ENCODE measurements at regions of chr1 and their contacts with region 1.

Region 1: GRCh38 chr1:32247983-32248889 is 1.2 kb downstream of the FAM167B start:
- DNase-seq: peak; percentile 73
- H3K4me3 Mint-ChIP-seq: peak overlapping the region; percentile 46
- H3K27ac Mint-ChIP-seq: peak overlapping the region; percentile 95
- H3K4me1 Mint-ChIP-seq: peaks cover 51% of the 10 kb centered on the region
- H3K27me3 Mint-ChIP-seq: no peaks in the 10 kb centered on the region

Region 2: GRCh38 chr1:32179443-32180185 is 68.6 kb before region 1 on chr1 and contains the start of gene TXLNA:
- intact Hi-C with region 1: loop called (anchors 5 kb)
- DNase-seq: peak; percentile 89
- H3K4me3 Mint-ChIP-seq: peak within 1 kb of the TSS; percentile 96
- H3K27ac Mint-ChIP-seq: peak within 1 kb of the TSS; percentile 93
- H3K4me1 Mint-ChIP-seq: peaks cover 47% of the 10 kb centered on the region
- H3K27me3 Mint-ChIP-seq: no peaks in the 10 kb centered on the region
- total RNA-seq, gene TXLNA: 109 and 110 TPM in 2 replicates

Region 3: GRCh38 chr1:32215629-32216480 is 32.4 kb before region 1 on chr1:
- intact Hi-C with region 1: loop called (anchors 1 kb)
- DNase-seq: peak; percentile 35
- H3K4me3 Mint-ChIP-seq: no peak overlapping the region
- H3K27ac Mint-ChIP-seq: no peak overlapping the region
- H3K4me1 Mint-ChIP-seq: peaks cover 17% of the 10 kb centered on the region
- H3K27me3 Mint-ChIP-seq: no peaks in the 10 kb centered on the region

Region 4: DNA sequence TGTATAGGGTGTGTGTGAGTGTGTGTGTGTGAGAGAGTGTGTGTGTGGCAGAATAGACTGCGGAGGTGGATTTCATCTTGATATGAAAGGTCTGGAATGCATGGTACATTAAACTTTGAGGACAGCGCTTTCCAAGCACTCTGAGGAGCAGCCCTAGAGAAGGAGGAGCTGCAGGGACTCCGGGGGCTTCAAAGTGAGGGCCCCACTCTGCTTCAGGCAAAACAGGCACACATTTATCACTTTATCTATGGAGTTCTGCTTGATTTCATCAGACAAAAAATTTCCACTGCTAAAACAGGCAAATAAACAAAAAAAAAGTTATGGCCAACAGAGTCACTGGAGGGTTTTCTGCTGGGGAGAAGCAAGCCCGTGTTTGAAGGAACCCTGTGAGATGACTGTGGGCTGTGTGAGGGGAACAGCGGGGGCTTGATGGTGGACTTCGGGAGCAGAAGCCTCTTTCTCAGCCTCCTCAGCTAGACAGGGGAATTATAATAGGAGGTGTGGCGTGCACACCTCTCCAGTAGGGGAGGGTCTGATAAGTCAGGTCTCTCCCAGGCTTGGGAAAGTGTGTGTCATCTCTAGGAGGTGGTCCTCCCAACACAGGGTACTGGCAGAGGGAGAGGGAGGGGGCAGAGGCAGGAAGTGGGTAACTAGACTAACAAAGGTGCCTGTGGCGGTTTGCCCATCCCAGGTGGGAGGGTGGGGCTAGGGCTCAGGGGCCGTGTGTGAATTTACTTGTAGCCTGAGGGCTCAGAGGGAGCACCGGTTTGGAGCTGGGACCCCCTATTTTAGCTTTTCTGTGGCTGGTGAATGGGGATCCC is 25.4 kb after region 1 on chr1:
- intact Hi-C with region 1: loop called (anchors 1 kb)
- DNase-seq: peak; percentile 57
- H3K4me3 Mint-ChIP-seq: peak overlapping the region; percentile 67
- H3K27ac Mint-ChIP-seq: peak overlapping the region; percentile 89
- H3K4me1 Mint-ChIP-seq: peaks cover 42% of the 10 kb centered on the region
- H3K27me3 Mint-ChIP-seq: no peaks in the 10 kb centered on the region

Region 5: DNA sequence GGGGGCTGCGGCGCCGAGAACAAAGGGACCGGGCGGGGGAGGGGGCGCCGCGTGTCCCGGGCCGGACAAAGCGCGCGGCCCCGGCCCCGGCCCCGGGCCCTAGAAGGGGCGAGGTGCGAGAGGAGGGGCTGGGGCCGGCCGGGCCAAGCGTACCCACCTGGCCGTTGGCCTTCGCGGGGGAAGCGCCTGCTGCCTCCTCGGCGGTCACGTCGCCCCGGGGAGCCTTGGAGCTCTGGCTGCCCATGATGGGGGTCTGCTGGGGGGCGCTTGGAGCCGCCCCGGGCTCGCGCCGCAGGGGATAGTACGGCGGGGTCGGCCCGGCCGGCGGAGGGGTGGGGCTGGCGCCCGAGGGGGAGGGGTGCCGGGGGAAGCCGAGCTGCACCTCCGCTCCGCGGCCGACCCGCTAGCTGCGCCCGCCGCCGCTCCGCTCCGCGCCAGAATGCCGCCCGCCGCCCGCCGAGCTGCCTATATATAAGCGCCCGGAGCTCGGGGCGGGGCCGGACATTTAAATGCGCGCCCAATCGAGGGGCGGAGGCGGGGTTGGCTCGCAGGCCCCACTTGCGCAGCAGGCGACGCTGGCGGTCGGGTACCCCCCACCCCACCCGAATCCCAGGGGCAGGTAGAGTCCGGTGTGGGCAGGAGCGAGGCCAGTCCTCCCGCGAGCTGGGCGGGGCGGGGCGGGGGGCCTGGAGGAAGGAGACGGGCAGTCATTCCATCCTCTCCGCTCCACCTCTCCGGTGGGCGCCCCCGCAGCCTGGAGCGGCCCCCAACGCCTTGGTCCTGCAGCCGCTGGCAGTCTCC is 87.8 kb after region 1 on chr1 and contains the start of gene MARCKSL1:
- intact Hi-C with region 1: loop called (anchors 2 kb)
- DNase-seq: peak; percentile 80
- H3K4me3 Mint-ChIP-seq: peak within 1 kb of the TSS; percentile 88
- H3K27ac Mint-ChIP-seq: peak within 1 kb of the TSS; percentile 67
- H3K4me1 Mint-ChIP-seq: peaks cover 52% of the 10 kb centered on the region
- H3K27me3 Mint-ChIP-seq: no peaks in the 10 kb centered on the region
- total RNA-seq, gene MARCKSL1: 31.6 and 31.8 TPM in 2 replicates

Region 6: GRCh38 chr1:32361674-32362473 is 113.6 kb after region 1 on chr1:
- intact Hi-C with region 1: no loop called
- DNase-seq: no peak
- H3K4me3 Mint-ChIP-seq: no peak overlapping the region
- H3K27ac Mint-ChIP-seq: no peak overlapping the region
- H3K4me1 Mint-ChIP-seq: peaks cover 17% of the 10 kb centered on the region
- H3K27me3 Mint-ChIP-seq: peaks cover 6% of the 10 kb centered on the region

Measured in activated T-helper 1 cell treated with anti-CD3 and anti-CD28 coated beads, Interleukin-12 subunit alpha, Interleukin-12 subunit beta, Interleukin-2, Interleukin-4 antibody, amounts not matched to agents 30 ng/mL and 10 ng/mL and 1 ng/mL, durations not matched to agents 14 hours and 24 hours and 36 hours (primary cell).